Dorsolateral prefrontal cortex (tissue), 120 donors: ENCODE measurements at regions of chr16 and their contacts with region 1.

Region 1: GRCh38 chr16:31094424-31095120 is at the start of gene VKORC1:
- DNase-seq: peak; percentile 88 to 97 (median 94)
- H3K4me3 ChIP-seq: peak within 1 kb of the TSS; percentile 61 to 99 (median 90)
- H3K27ac ChIP-seq: peak within 1 kb of the TSS; percentile 45 to 96 (median 87)
- H3K27me3 ChIP-seq: no peaks in the 10 kb centered on the region
- CTCF ChIP-seq: peak in 37 of 56 donors; percentile 11 to 59 (median 33)
- total RNA-seq, gene VKORC1: 23.4 to 53.8 (median 37.0) TPM

Region 2: DNA sequence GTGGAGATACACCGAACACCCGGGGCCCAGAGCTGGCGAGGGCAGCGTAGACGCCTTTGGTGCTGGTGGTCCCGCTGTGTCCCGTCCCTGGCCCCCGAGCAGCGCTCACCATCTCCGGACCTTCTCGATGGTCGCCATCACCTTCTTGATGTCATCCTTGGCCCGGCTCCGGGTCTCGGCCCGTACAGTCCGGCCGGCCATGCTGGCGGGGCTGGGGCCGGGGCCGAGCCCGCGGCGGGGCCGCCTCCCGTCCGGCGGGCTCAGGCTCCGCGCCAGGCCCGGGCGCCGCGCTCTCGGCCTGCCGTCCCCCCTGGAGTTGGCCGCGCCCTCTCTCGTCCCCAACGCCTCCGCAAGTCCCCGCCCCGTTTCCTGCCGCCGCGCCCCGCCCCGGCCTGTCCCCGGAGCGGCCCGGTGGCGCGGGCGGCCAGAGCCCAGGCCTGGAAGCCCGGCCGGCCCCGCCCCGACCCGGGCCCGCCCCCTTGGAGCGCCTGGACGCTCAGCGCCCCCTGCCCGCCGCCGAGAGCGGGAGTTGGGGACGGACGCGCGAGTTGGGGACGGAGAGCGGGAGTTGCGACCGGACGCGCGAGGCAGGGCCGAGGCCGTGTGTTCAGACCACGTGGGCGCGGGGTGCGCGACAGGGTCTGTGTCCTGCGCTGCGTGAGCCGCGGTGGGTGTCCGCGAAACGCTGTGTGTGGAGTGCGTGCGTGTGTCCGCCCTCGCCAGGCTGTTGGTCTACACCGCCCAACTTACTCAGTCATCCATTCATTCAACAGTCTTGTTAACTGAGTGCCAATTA is 200.6 kb before region 1 on chr16 and contains the start of gene BCL7C:
- intact Hi-C with region 1: no loop called
- DNase-seq: peak; percentile 60 to 89 (median 77)
- H3K4me3 ChIP-seq: peak within 1 kb of the TSS; percentile 55 to 93 (median 80)
- H3K27ac ChIP-seq: peak within 1 kb of the TSS; percentile 66 to 97 (median 91)
- H3K27me3 ChIP-seq: no peaks in the 10 kb centered on the region
- CTCF ChIP-seq: peak in 51 of 56 donors; percentile 18 to 79 (median 55)
- total RNA-seq, gene BCL7C: 8.8 to 28.1 (median 15.6) TPM

Region 3: GRCh38 chr16:31032736-31033708 is 61.5 kb before region 1 on chr16 and contains the start of gene STX4:
- intact Hi-C with region 1: loop called in 1 of 2 experiments (anchors 5 kb)
- DNase-seq: peak; percentile 96 to 99 (median 98)
- H3K4me3 ChIP-seq: peak within 1 kb of the TSS; percentile 55 to 100 (median 96)
- H3K27ac ChIP-seq: peak within 1 kb of the TSS; percentile 85 to 100 (median 99)
- H3K27me3 ChIP-seq: no peaks in the 10 kb centered on the region
- CTCF ChIP-seq: peak in 20 of 56 donors; percentile 8 to 47 (median 20)
- total RNA-seq, gene STX4: 37.7 to 113 (median 67.3) TPM

Region 4: DNA sequence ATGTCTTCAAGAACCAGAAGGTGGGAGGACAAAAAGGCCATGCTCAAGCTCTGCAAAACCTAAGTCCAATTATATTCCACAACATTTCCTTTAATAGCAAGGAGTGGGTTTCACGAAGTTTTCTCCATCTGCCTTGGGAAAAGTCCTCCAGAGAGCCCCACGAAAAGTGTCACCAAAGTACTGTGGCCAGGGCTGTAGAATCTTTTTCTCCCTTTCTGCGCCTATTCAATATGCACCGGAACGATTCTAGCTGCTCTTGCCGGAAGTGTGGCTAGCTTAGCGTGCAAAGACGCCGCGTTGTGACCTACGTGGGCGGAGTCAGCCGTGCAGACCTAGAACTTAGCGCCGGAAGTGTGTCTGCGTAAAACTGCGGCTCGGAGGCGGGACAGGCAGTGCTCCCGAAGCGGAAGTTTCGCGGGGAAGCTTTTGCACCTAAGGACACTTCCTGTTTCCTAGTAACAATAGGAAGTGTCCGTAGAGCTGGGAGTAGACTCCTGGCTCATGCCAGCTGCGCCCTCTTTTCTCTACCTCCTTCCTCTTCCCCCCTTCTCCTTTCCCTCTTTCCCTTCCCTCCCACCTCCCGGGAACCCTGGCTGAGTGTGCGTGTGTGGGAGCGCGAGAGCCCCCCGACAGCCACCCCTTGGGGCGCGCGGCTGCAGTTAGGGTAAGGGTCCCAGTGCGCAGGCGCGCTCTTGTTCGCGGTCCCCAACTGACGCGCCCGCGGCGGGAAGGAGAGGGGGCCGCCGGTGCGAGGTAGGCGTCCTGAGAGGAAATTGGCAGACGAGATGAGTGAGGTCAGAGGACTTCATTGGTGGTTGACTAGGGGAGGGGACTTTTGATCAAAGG is 20.4 kb before region 1 on chr16 and contains the starts of genes ZNF646 and ZNF668:
- intact Hi-C with region 1: loop called (anchors 2 kb)
- DNase-seq: peak; percentile 98 to 100 (median 99)
- H3K4me3 ChIP-seq: peak within 1 kb of the TSS; percentile 74 to 99 (median 95)
- H3K27ac ChIP-seq: peak within 1 kb of the TSS; percentile 78 to 98 (median 95)
- H3K27me3 ChIP-seq: no peaks in the 10 kb centered on the region
- CTCF ChIP-seq: peak in 27 of 56 donors; percentile 5 to 44 (median 20)
- total RNA-seq, gene ZNF646: 11.2 to 24.3 (median 16.7) TPM
- total RNA-seq, gene ZNF668: 7.9 to 24.5 (median 12.5) TPM

Region 5: GRCh38 chr16:31440516-31441184 is 346.1 kb after region 1 on chr16:
- intact Hi-C with region 1: loop called in 1 of 2 experiments (anchors 10 kb)
- DNase-seq: peak in 2 of 10 donors; percentile 6 to 11
- H3K4me3 ChIP-seq: no peak overlapping the region
- H3K27ac ChIP-seq: peak overlapping the region in 40 of 59 donors; percentile 2 to 73 (median 46)
- H3K27me3 ChIP-seq: no peaks in the 10 kb centered on the region
- CTCF ChIP-seq: no peak

Region 6: DNA sequence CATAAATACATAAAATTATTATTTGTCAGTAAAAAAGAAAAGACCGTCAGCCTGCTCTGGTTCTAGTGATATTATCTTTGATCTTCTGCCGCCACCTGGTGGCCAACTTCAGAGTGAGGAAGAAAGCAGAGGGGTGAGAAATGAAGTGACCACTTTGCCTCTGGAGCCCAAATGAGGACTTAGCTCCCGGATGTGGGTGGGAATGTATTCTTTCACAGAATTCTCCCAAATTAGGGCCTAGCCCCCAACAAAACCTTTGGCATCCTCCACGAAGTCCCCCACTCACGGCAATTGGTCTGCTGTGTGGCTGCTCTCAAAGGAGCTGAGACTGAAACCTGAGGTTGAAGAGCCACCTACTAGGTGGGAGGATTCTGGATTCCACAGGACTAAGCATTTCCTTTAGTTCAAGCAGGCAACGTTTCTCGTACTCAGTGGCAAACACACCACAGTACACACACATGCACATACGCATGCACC is 774.2 kb after region 1 on chr16:
- intact Hi-C with region 1: loop called in 1 of 2 experiments (anchors 10 kb)
- DNase-seq: peak; percentile 60 to 89 (median 79)
- H3K4me3 ChIP-seq: peak overlapping the region in 27 of 59 donors; percentile 1 to 35 (median 18)
- H3K27ac ChIP-seq: peak overlapping the region in 18 of 59 donors; percentile 1 to 71 (median 46)
- H3K27me3 ChIP-seq: no peaks in the 10 kb centered on the region
- CTCF ChIP-seq: peak; percentile 79 to 97 (median 91)